ENCODE measurements at regions of chr5 and their contacts with region 1.

Region 1: DNA sequence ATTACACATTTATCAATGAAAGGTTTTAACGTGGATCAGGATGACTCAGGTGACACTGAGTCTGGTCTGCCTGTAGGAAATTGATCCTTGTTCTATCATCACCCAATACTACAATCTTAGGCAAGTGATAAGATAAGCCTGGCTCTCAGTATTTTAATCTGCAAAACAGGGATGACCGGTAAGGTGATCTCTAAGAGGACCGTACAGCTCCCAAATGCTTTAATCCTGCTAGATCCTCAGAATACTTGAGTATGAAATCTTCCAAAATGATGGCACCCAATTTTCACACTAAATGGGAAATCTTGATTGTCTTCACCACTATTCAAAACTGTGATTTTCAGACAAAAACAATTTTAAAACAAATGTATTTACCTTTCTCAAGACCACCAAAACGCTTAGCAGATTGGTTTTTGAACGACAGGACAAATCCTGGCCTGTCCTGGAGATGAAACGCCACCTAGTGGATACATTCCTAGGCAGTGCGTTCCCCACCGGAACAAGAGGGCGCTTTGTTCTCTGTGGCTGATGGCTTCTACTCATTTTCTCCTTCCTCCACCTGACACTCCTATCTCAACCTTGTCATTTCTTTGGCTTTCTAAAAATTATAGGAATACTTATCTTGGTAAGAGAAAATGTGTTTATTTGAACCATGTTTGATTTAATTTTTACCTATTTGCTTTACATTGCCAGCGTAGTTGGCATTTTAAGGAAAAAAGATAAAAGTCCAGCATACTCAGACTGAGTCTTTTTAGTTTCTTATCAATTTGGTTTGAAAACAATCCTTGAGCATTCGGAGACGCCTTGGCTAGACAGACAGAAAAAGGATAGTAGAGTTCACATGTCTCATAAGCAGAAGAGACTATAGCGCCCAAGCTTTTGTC is 41.2 kb upstream of the VCAN start:
- DNase-seq: peak in 1 of 2 donors; percentile 60
- ATAC-seq: peak in 7 of 8 donors; percentile 52 to 88 (median 82)
- H3K4me3 ChIP-seq: no peak overlapping the region
- H3K27ac ChIP-seq: no peak overlapping the region
- H3K4me1 ChIP-seq: peaks cover 0 to 8% (median 0%) of the 10 kb centered on the region in 9 donors
- H3K27me3 ChIP-seq: no peaks in the 10 kb centered on the region
- CTCF ChIP-seq: peak; percentile 57 to 93 (median 86)

Region 2: GRCh38 chr5:82312373-82312856 is 1118.0 kb before region 1 on chr5:
- intact Hi-C with region 1: loop called in 1 of 10 experiments (anchors 10 kb)
- DNase-seq: peak; percentile 54 to 64
- ATAC-seq: peak; percentile 68 to 90 (median 82)
- H3K4me3 ChIP-seq: peak overlapping the region in 2 of 10 donors; percentile 11 to 30
- H3K27ac ChIP-seq: peak overlapping the region in 7 of 10 donors; percentile 12 to 65 (median 37)
- H3K4me1 ChIP-seq: peaks cover 0 to 14% (median 10%) of the 10 kb centered on the region in 9 donors
- H3K27me3 ChIP-seq: no peaks in the 10 kb centered on the region
- CTCF ChIP-seq: peak; percentile 58 to 93 (median 80)

Region 3: DNA sequence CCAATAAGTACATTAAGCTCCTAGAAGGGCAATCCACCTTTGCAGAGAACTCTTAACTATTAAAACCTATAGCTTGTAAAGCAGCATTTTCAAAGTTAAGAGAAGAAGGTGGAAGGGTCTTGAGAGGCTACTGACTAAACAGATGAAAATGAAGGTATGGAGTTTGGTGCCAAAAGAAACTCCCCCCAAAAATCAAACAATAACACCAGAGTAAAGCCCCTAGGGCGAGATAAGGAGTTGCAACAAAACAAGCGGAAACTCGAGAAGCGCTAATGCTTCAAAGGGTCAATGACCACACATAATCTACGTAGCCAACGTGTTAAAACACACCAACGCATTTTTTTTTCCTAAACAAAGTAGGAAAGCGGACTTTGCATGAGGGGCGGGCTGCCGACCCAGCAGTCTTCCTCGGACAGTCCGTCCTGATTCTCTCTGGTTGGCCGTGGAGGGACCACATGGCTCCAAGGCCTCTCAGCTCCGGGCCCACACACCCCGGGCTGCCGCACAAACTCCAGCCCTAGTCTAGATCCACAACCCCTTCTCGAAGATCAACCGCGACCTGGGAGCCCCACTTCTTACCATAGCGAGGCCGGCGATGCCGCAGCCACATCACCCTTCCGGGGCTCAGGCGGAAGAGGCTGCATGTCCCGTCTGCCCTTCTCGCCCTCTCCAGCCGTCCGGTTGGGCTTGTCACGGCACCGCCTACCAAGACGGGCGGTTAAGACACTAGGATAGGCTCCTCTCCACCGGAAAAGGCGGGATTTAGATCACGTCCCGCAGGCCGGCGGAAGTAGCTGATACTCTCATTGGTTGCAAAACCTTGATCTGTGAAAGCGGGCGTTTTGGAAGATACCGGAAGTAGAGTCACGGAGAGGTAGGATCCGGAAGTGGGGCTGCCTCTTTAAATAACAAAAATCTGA is 353.4 kb before region 1 on chr5 and contains the starts of genes TMEM167A and XRCC4:
- intact Hi-C with region 1: loop called in 1 of 10 experiments (anchors 10 kb)
- DNase-seq: peak; percentile 94 to 97
- ATAC-seq: peak; percentile 100
- H3K4me3 ChIP-seq: peak within 1 kb of the TSS; percentile 44 to 90 (median 78)
- H3K27ac ChIP-seq: peak within 1 kb of the TSS; percentile 11 to 95 (median 85)
- H3K4me1 ChIP-seq: peaks cover 0 to 56% (median 45%) of the 10 kb centered on the region in 9 donors
- H3K27me3 ChIP-seq: no peaks in the 10 kb centered on the region
- CTCF ChIP-seq: no peak
- total RNA-seq, gene TMEM167A: 35.5 to 53.5 (median 44.5) TPM
- total RNA-seq, gene XRCC4: 4.0 to 10.7 (median 6.8) TPM

Region 4: DNA sequence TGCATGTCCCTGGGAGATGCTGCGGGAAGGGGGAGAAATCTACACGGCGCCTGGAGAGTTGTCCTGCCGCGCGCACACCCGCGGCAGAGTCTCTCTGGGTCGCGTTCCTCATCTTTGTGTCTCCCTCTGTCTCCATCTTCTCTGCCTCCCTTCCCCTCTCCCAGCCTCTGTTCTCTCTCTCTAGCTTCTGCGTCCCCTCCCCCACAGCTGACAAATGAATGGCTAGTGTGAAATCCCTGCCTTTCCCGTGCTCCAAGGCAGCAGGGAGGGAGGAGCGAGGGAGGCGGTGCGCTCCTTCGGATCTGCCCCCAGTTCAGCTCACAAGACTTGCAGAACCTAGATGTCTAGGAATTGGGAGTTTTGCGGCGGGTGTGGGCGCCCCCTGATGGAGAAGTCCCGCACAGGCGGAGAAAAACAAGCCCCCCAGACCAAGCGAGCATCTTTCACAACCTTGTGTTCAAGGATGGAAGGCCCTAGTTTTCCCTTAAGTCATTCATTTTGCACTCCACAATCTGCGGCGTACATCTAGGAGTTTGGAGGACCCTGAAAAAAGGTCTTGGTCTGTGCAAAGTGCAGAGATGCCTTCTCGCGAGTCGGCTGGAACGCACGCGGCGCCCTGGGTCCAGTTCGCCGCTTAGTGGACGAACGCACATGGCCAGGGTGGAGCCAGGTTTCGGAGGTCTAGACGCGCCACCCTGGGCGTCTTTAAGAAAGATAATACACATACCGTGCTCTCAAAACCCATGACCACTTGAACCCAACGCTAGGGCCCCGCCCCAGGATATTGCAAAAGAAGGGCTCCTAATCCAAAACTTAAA is 43.2 kb after region 1 on chr5:
- intact Hi-C with region 1: loop called in 1 of 10 experiments (anchors 5 kb)
- DNase-seq: peak; percentile 84 to 90
- ATAC-seq: peak; percentile 81 to 92 (median 86)
- H3K4me3 ChIP-seq: peak overlapping the region; percentile 33 to 68 (median 58)
- H3K27ac ChIP-seq: peak overlapping the region; percentile 23 to 86 (median 77)
- H3K4me1 ChIP-seq: peaks cover 0 to 58% (median 36%) of the 10 kb centered on the region in 9 donors
- H3K27me3 ChIP-seq: peaks cover 0 to 84% (median 58%) of the 10 kb centered on the region in 7 donors
- CTCF ChIP-seq: peak; percentile 58 to 94 (median 84)

Region 5: GRCh38 chr5:83553000-83553486 is 122.7 kb after region 1 on chr5:
- intact Hi-C with region 1: no loop called
- DNase-seq: peak; percentile 17 to 68
- ATAC-seq: peak; percentile 37 to 94 (median 74)
- H3K4me3 ChIP-seq: no peak overlapping the region
- H3K27ac ChIP-seq: peak overlapping the region in 6 of 10 donors; percentile 28 to 61 (median 42)
- H3K4me1 ChIP-seq: peaks cover 0 to 21% (median 3%) of the 10 kb centered on the region in 9 donors
- H3K27me3 ChIP-seq: no peaks in the 10 kb centered on the region
- CTCF ChIP-seq: no peak

Region 6: DNA sequence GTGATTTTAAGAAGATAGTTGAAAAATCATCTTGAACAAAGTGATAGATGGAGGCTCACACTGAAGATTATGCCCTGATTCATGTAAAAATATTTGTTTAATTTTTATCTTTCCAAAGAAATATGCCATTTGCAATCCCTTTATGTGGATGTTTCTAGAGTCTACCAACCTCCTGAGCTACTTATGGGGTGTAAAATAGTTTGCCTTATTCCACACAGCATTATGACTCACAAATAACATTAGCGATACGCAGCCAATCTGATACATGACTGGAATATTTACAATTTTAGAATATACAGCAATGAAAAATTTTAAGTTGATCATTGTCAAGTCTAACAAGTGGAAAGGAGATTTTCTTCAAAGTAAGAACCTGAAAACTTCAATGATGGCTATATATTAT is 626.8 kb after region 1 on chr5:
- intact Hi-C with region 1: no loop called
- DNase-seq: no peak
- ATAC-seq: no peak
- H3K4me3 ChIP-seq: no peak overlapping the region
- H3K27ac ChIP-seq: no peak overlapping the region
- H3K4me1 ChIP-seq: no peaks in the 10 kb centered on the region
- H3K27me3 ChIP-seq: no peaks in the 10 kb centered on the region
- CTCF ChIP-seq: no peak

Measured in heart right ventricle (tissue), 16 donors.